Activated T-helper 2 cell treated with anti-CD3 and anti-CD28 coated beads, Interferon-gamma antibody, Interleukin-2, Interleukin-4, amounts not matched to agents 10 μg/mL and 5 μg/mL and 100 μg/mL, durations not matched to agents 14 hours and 24 hours and 36 hours (primary cell): ENCODE measurements at regions of chr14 and their contacts with region 1.

Region 1: DNA sequence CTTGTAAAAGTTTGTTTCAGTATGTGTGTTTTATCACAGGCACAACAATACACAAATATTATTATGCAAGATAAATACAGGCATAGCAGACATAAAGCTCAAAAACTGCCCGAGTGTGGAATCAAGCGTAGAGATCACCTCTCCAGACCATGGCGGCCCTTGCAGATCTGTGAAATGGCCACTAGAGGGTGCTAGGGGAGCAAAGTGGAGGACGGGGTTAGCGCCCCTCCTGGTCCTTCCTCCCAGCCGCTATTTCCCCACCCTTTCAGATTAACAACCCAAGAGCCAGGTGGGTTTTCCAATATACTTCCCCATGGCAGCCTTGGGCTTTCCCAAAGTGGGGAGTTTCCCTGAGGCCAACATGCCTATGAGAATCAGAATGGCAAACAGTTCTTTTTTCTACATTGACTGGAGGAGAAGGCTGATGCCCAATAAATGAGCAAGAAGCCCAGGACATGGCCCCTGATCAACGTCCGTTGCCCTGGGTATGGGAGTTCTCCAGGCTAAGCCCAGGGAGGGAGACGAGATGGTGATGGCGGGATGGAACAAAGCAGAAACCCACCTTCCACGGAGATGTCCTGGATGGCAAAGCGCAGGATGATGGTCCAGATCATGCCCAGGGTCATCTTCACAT is 67.4 kb downstream of the ACTN1 start:
- DNase-seq: peak; percentile 60
- H3K4me3 Mint-ChIP-seq: no peak overlapping the region
- H3K27ac Mint-ChIP-seq: no peak overlapping the region
- H3K4me1 Mint-ChIP-seq: peaks cover 19% of the 10 kb centered on the region
- H3K27me3 Mint-ChIP-seq: no peaks in the 10 kb centered on the region

Region 2: GRCh38 chr14:68444449-68445168 is 467.1 kb before region 1 on chr14:
- intact Hi-C with region 1: no loop called
- DNase-seq: no peak
- H3K4me3 Mint-ChIP-seq: no peak overlapping the region
- H3K27ac Mint-ChIP-seq: no peak overlapping the region
- H3K4me1 Mint-ChIP-seq: no peaks in the 10 kb centered on the region
- H3K27me3 Mint-ChIP-seq: no peaks in the 10 kb centered on the region

Region 3: DNA sequence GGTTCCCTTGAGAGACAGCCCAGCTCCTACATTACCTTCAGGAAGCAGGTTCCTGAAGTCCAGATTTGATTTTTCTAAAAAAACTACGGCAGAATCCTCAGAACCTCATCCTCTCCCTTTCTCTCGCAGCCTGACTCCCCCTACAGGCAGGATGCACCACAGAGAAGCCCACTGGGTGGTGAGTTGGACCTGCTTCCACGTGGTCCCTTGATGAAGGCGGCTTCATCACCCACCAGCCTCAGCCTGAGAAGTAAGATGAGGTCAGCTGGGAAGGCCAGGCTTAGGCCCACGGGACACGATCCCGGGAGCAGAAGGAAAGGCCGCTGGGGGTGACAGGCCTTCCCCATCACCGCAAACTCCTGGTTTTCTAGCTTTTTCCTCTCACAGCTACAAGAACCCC is 15.6 kb before region 1 on chr14:
- intact Hi-C with region 1: no loop called
- DNase-seq: no peak
- H3K4me3 Mint-ChIP-seq: no peak overlapping the region
- H3K27ac Mint-ChIP-seq: no peak overlapping the region
- H3K4me1 Mint-ChIP-seq: peaks cover 26% of the 10 kb centered on the region
- H3K27me3 Mint-ChIP-seq: no peaks in the 10 kb centered on the region

Region 4: DNA sequence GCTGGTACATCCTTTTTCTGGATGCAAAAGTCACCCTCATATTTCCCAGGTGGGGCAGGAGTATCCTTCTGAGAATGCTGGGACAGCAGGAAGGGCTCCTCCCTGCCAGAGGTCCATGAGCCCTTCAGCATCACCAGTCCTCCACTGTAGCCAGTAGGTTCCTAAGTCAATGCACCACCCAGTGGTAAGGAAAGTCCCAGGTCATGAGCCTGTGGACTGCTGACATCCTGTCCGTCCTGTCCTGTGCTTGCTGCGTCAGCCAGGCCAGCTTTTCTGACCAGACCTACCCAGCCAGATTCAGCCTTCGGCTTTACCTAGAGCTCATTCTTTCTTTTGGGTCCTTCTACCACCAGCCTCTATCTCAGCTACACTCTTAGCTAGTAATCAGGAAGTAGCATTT is 90.4 kb after region 1 on chr14:
- intact Hi-C with region 1: loop called (anchors 5 kb)
- DNase-seq: no peak
- H3K4me3 Mint-ChIP-seq: no peak overlapping the region
- H3K27ac Mint-ChIP-seq: no peak overlapping the region
- H3K4me1 Mint-ChIP-seq: peaks cover 7% of the 10 kb centered on the region
- H3K27me3 Mint-ChIP-seq: no peaks in the 10 kb centered on the region

Region 5: GRCh38 chr14:69090187-69090789 is 178.6 kb after region 1 on chr14:
- intact Hi-C with region 1: loop called (anchors 1 kb)
- DNase-seq: no peak
- H3K4me3 Mint-ChIP-seq: no peak overlapping the region
- H3K27ac Mint-ChIP-seq: no peak overlapping the region
- H3K4me1 Mint-ChIP-seq: peaks cover 16% of the 10 kb centered on the region
- H3K27me3 Mint-ChIP-seq: no peaks in the 10 kb centered on the region

Region 6: GRCh38 chr14:69107407-69108003 is 195.8 kb after region 1 on chr14:
- intact Hi-C with region 1: loop called (anchors 1 kb)
- DNase-seq: no peak
- H3K4me3 Mint-ChIP-seq: no peak overlapping the region
- H3K27ac Mint-ChIP-seq: no peak overlapping the region
- H3K4me1 Mint-ChIP-seq: peaks cover under 1% of the 10 kb centered on the region
- H3K27me3 Mint-ChIP-seq: no peaks in the 10 kb centered on the region

Region 7: GRCh38 chr14:69183735-69184134 is 272.0 kb after region 1 on chr14:
- intact Hi-C with region 1: no loop called
- DNase-seq: no peak
- H3K4me3 Mint-ChIP-seq: no peak overlapping the region
- H3K27ac Mint-ChIP-seq: no peak overlapping the region
- H3K4me1 Mint-ChIP-seq: no peaks in the 10 kb centered on the region
- H3K27me3 Mint-ChIP-seq: peaks cover 17% of the 10 kb centered on the region